Ovary (tissue), 10 donors: ENCODE measurements at regions of chr20 and their contacts with region 1.

Region 1: GRCh38 chr20:7285918-7286556 is 518.6 kb downstream of the BMP2 start:
- DNase-seq: peak; percentile 43 to 76 (median 62)
- H3K4me3 ChIP-seq: no peak overlapping the region
- H3K27ac ChIP-seq: no peak overlapping the region
- H3K4me1 ChIP-seq: no peaks in the 10 kb centered on the region
- H3K27me3 ChIP-seq: no peaks in the 10 kb centered on the region
- CTCF ChIP-seq: peak in 2 of 3 donors; percentile 20 to 68
- EP300 ChIP-seq: no peak
- POLR2A ChIP-seq: no peak

Region 2: GRCh38 chr20:6142348-6142993 is 1143.6 kb before region 1 on chr20:
- intact Hi-C with region 1: loop called in 1 of 4 experiments (anchors 10 kb)
- DNase-seq: peak in 1 of 5 donors; percentile 43
- H3K4me3 ChIP-seq: no peak overlapping the region
- H3K27ac ChIP-seq: no peak overlapping the region
- H3K4me1 ChIP-seq: no peaks in the 10 kb centered on the region
- H3K27me3 ChIP-seq: no peaks in the 10 kb centered on the region
- CTCF ChIP-seq: peak in 2 of 3 donors; percentile 53
- EP300 ChIP-seq: no peak
- POLR2A ChIP-seq: no peak

Region 3: DNA sequence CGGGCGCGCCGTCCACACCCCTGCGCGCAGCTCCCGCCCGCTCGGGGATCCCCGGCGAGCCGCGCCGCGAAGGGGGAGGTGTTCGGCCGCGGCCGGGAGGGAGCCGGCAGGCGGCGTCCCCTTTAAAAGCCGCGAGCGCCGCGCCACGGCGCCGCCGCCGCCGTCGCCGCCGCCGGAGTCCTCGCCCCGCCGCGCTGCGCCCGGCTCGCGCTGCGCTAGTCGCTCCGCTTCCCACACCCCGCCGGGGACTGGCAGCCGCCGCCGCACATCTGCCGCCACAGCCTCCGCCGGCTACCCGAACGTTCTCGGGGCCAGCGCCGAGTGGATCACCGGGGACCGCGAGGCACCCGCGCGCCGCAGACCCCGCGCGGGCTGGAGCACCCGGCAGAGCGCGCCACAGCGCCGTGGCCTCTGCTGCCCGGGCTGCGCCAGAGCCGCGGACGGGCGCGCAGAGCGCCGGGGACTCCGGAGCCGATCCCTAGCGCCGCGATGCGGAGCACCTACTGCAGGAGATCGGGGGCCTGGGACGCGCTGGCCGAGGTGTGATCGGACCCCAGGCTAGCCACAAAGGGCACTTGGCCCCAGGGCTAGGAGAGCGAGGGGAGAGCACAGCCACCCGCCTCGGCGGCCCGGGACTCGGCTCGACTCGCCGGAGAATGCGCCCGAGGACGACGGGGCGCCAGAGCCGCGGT is 518.4 kb before region 1 on chr20 and contains the start of gene BMP2:
- intact Hi-C with region 1: loop called in 2 of 4 experiments (anchors 5 to 10 kb)
- DNase-seq: peak; percentile 20 to 64 (median 30)
- H3K4me3 ChIP-seq: peak within 1 kb of the TSS; percentile 45
- H3K27ac ChIP-seq: peak within 1 kb of the TSS in 1 of 2 donors; percentile 9
- H3K4me1 ChIP-seq: peaks cover 9% of the 10 kb centered on the region
- H3K27me3 ChIP-seq: no peaks in the 10 kb centered on the region
- CTCF ChIP-seq: no peak
- EP300 ChIP-seq: no peak
- POLR2A ChIP-seq: no peak
- total RNA-seq, gene BMP2: 0.58 to 9.7 (median 2.3) TPM

Region 4: GRCh38 chr20:7189231-7189630 is 96.8 kb before region 1 on chr20:
- intact Hi-C with region 1: no loop called
- DNase-seq: no peak
- H3K4me3 ChIP-seq: no peak overlapping the region
- H3K27ac ChIP-seq: no peak overlapping the region
- H3K4me1 ChIP-seq: no peaks in the 10 kb centered on the region
- H3K27me3 ChIP-seq: no peaks in the 10 kb centered on the region
- CTCF ChIP-seq: no peak
- EP300 ChIP-seq: no peak
- POLR2A ChIP-seq: no peak

Region 5: DNA sequence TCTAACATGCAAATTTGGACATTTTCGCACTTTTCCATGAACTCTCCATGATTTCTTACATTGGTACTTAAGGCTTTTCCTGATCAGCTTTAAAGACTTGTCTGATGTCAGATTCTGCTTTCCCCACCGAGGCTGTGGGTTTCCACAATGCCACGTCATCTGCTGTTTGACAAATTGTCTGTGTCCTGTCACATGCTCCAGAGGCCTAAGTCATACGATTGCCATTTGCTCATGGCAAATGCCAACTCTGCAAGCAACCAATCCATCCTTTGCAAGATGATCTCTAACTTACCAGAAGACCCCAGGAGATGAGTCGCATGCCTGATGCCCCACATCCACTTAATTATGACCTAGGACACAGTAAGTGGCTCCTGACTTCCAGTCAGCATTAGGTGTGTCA is 37.9 kb after region 1 on chr20:
- intact Hi-C with region 1: no loop called
- DNase-seq: no peak
- H3K4me3 ChIP-seq: no peak overlapping the region
- H3K27ac ChIP-seq: no peak overlapping the region
- H3K4me1 ChIP-seq: no peaks in the 10 kb centered on the region
- H3K27me3 ChIP-seq: no peaks in the 10 kb centered on the region
- CTCF ChIP-seq: no peak
- EP300 ChIP-seq: no peak
- POLR2A ChIP-seq: no peak